ENCODE measurements at regions of chr3 and their contacts with region 1.

Region 1: DNA sequence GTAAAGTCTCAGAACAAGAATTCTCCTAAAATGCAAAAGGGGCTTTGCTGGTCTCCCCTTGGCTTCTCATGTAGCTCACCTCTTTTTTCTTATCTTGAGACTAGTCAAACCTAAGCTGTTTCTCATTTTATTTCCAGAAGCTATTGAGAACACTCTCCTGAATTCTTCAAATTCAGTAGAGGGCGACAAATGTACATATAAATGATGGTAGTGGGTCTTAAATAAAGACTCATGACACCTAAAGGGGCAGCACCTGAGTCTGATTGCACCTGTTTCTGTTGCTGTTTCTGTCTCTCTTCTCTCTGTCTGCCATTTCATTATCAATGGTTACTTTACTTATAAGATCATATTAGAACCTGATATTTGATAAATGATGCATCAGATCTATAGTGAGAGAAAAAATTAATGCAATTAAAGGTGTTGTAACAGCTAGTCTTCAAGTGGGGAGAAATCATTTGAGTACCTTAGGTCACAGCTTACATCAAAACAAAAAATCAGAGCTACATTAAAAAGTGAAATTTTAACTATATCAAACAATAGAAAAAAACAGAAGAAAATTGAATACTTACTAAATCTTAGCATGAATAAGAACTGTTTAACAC is 7.0 kb downstream of the ADIPOQ start:
- DNase-seq: peak; percentile 25
- H3K4me3 Mint-ChIP-seq: no peak overlapping the region
- H3K27ac Mint-ChIP-seq: no peak overlapping the region
- H3K4me1 Mint-ChIP-seq: peaks cover 18% of the 10 kb centered on the region
- H3K27me3 Mint-ChIP-seq: peaks cover 4% of the 10 kb centered on the region

Region 2: GRCh38 chr3:186722456-186722855 is 127.0 kb before region 1 on chr3:
- CTCF ChIA-PET with region 1: no interaction called
- POLR2A ChIA-PET with region 1: no interaction called
- intact Hi-C with region 1: no loop called
- DNase-seq: no peak
- H3K4me3 Mint-ChIP-seq: no peak overlapping the region
- H3K27ac Mint-ChIP-seq: no peak overlapping the region
- H3K4me1 Mint-ChIP-seq: no peaks in the 10 kb centered on the region
- H3K27me3 Mint-ChIP-seq: no peaks in the 10 kb centered on the region

Region 3: GRCh38 chr3:186946756-186947375 is 97.4 kb after region 1 on chr3:
- CTCF ChIA-PET with region 1: interaction called, 11 read pairs
- POLR2A ChIA-PET with region 1: no interaction called
- intact Hi-C with region 1: no loop called
- DNase-seq: no peak
- H3K4me3 Mint-ChIP-seq: no peak overlapping the region
- H3K27ac Mint-ChIP-seq: no peak overlapping the region
- H3K4me1 Mint-ChIP-seq: peaks cover 57% of the 10 kb centered on the region
- H3K27me3 Mint-ChIP-seq: no peaks in the 10 kb centered on the region

Region 4: GRCh38 chr3:187025656-187026316 is 176.3 kb after region 1 on chr3:
- CTCF ChIA-PET with region 1: interaction called, 19 read pairs
- POLR2A ChIA-PET with region 1: no interaction called
- intact Hi-C with region 1: no loop called
- DNase-seq: peak; percentile 59
- H3K4me3 Mint-ChIP-seq: peak overlapping the region; percentile 84
- H3K27ac Mint-ChIP-seq: peak overlapping the region; percentile 96
- H3K4me1 Mint-ChIP-seq: peaks cover 46% of the 10 kb centered on the region
- H3K27me3 Mint-ChIP-seq: no peaks in the 10 kb centered on the region

Region 5: DNA sequence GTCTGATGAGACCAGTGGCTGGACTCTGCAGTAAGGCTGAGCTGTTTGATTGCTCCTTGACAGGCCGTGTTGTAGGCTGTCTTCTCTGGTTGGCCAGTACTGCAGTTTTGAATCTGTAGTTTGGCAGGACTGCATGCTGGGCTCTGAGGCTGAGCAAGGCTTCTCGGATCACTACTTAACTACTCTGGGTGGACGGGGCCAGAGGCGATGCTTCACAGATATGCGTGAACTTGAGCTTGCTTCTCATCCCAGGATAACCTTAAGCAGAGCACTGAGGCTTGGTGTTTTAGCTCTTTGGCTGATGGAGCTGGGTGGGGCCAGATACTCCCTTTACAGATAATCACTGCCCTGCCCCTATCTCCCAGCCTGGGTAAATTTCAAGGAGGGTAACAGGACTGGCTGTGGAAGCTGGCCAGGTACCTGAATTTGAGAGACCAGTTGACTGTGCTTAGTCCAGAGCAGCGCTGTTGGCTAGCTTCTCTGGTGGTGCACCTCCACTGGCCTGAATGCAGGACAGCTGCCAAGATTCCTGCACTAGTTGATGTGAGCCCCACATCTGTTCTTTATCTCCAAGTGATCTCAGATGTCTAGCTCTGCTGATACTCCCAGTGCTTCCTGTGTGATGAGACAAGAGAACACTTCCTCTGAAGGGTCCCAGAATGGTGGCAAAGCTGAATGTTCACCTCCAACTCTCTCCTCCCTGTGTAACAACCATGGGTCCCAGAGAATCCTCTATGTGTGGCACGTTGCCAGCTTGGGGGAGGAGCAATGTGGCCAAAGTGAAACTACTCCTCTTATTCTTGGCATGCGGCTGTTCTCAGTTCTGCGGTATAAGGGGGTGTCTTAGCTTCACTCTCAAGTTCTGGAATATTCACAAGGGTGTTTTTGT is 252.0 kb after region 1 on chr3:
- CTCF ChIA-PET with region 1: interaction called, 13 read pairs
- POLR2A ChIA-PET with region 1: no interaction called
- intact Hi-C with region 1: no loop called
- DNase-seq: peak; percentile 68
- H3K4me3 Mint-ChIP-seq: peak overlapping the region; percentile 20
- H3K27ac Mint-ChIP-seq: peak overlapping the region; percentile 28
- H3K4me1 Mint-ChIP-seq: peaks cover 30% of the 10 kb centered on the region
- H3K27me3 Mint-ChIP-seq: no peaks in the 10 kb centered on the region

Region 6: DNA sequence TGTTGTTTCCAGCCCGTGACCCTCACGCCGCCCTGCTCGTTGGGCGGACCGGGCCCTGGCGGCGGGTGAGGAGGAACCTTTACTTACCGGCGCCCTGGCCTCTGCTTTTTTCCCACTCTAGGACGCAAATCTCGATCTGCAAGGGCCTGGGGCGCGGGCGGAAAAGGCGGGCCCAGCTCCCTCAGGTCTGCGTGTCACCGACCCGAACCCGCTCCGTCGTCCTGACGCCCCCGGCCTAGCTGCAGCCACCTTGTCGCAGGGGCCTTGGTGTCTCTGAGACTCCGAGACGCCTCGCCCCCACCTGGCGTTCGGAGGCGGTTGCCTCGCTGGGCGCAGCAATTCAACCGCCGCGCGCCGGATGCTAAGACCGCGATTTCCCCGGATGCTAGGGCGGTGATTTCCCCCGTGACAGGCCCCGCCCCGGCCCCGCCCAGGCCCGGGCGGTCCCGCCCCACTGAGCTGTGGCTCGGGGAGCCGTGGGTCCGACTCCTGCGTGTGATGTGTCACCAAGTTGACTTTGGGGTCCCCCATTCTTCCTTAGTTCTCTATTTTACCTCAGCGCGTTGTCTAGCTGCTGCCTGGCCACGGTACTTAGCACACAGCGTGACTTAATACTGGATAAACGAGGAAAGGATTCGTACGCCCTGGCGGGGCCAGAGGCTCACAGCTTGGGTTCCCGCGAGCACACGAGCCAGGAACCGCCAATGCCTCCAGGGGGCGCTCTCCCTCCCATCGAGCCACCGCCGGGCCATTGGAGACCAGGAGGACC is 289.8 kb after region 1 on chr3 and contains the start of gene RPL39L:
- CTCF ChIA-PET with region 1: interaction called, 13 read pairs
- POLR2A ChIA-PET with region 1: no interaction called
- intact Hi-C with region 1: no loop called
- DNase-seq: peak; percentile 96
- H3K4me3 Mint-ChIP-seq: peak within 1 kb of the TSS; percentile 91
- H3K27ac Mint-ChIP-seq: peak within 1 kb of the TSS; percentile 93
- H3K4me1 Mint-ChIP-seq: peaks cover 22% of the 10 kb centered on the region
- H3K27me3 Mint-ChIP-seq: no peaks in the 10 kb centered on the region
- total RNA-seq, gene RPL39L: 22.5 to 25.2 TPM

Region 7: DNA sequence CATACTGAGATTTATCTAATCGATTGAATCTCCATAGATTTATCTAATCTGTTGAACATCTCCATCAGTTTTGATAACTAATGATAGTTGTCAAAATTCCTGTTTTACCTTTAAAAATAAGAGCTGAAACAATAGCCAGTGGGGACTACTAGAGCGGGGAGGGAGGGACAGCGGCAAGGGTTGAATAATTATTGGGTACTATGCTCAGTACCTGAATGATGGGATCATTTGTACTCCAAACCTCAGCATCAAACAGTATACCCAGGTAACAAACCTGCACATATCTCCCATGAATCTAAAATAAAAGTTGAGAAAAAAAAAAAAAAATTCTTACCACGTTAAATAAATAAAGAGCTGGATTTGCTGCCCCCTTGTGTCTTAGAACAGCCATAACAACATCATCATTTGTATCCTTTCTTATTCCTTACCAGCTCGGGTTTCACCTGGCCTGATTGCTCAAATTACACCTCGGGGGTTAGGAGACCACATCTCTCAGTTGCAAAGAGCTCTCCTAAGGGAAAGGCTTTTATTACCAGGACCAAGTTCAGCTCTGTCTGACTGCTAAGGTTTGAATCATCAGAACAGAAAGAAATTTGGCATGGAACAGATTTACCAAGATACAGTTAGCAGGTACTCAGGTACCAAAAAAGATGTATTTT is 315.5 kb after region 1 on chr3:
- CTCF ChIA-PET with region 1: interaction called, 68 read pairs
- POLR2A ChIA-PET with region 1: no interaction called
- intact Hi-C with region 1: loop called (anchors 1 kb)
- DNase-seq: peak; percentile 20
- H3K4me3 Mint-ChIP-seq: no peak overlapping the region
- H3K27ac Mint-ChIP-seq: no peak overlapping the region
- H3K4me1 Mint-ChIP-seq: peaks cover 1% of the 10 kb centered on the region
- H3K27me3 Mint-ChIP-seq: peaks cover 3% of the 10 kb centered on the region

Measured in activated CD4-positive, alpha-beta memory T cell treated with anti-CD3 and anti-CD28 coated beads for 36 hours (primary cell).